ENCODE measurements at regions of chr3 and their contacts with region 1.

Region 1: GRCh38 chr3:158727206-158728060 is 4.8 kb downstream of the RARRES1 start:
- DNase-seq: peak; percentile 76 to 88 (median 86)
- H3K4me3 ChIP-seq: peak overlapping the region in 5 of 7 experiments; percentile 4 to 67 (median 37)
- H3K27ac ChIP-seq: peak overlapping the region in 1 of 2 experiments; percentile 43
- H3K4me1 ChIP-seq: peaks cover 10 to 39% (median 21%) of the 10 kb centered on the region in 4 experiments
- H3K27me3 ChIP-seq: peaks cover 0 to 6% (median 4%) of the 10 kb centered on the region in 5 experiments

Region 2: DNA sequence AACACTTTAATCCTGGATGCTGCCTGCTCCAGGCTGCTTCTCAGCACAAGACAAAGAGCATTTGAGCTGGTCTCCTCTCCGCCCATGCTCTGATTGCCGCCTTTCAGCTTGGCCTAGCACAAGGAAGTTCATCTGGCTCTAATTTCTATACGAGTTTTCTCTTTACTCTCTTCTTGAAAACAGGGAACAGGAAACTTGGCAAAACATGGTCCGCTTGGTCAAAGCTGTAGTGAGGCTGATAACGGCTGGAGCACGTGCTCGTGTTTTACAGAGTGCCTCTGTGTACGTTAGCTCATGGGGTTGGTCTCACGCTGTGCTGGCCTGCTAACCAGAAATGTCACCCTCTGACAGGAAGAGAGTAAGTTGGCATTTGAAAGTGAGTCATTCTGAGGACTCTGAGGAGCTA is 14.3 kb before region 1 on chr3:
- CTCF ChIA-PET with region 1: interaction called, 25 read pairs
- POLR2A ChIA-PET with region 1: interaction called, 4 read pairs
- DNase-seq: peak; percentile 73 to 93 (median 87)
- H3K4me3 ChIP-seq: no peak overlapping the region
- H3K27ac ChIP-seq: peak overlapping the region; percentile 1 to 25
- H3K4me1 ChIP-seq: peaks cover 9 to 49% (median 13%) of the 10 kb centered on the region in 4 experiments
- H3K27me3 ChIP-seq: no peaks in the 10 kb centered on the region

Region 3: DNA sequence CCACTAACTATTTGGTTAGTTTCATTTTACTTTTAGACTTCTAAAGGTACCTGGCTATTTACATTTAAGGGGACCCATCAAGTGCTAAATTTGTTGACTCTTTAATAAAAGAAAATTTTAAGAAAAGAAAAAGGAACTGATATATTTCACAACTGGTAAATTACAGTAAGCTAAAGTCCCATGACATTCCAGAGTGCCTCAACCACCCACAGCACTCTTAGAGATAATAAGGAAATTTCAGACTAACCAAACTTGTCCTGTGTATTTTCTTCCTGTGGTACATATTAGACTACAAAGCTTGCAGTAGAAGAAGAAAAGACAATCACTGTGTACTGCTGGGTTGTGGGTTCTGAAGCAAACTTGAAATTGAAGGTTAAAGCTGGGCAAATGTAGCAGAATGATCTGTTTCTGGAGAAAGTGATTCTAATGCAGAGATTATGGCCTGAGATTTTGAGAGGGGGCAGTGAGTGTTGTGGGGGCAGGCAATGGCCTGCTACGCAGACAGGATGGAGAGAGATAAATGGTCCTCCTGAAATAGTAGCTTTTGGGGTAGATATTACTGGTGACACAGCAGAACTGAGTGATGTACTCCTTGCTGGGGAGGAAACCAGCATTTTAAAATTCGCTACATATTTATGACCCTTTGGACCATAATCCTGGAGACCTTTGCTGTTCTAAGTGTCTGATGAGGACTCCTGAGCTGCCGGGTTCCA is 49.9 kb after region 1 on chr3:
- CTCF ChIA-PET with region 1: interaction called, 14 read pairs
- POLR2A ChIA-PET with region 1: no interaction called
- DNase-seq: no peak
- H3K4me3 ChIP-seq: no peak overlapping the region
- H3K27ac ChIP-seq: no peak overlapping the region
- H3K4me1 ChIP-seq: no peaks in the 10 kb centered on the region
- H3K27me3 ChIP-seq: no peaks in the 10 kb centered on the region

Region 4: DNA sequence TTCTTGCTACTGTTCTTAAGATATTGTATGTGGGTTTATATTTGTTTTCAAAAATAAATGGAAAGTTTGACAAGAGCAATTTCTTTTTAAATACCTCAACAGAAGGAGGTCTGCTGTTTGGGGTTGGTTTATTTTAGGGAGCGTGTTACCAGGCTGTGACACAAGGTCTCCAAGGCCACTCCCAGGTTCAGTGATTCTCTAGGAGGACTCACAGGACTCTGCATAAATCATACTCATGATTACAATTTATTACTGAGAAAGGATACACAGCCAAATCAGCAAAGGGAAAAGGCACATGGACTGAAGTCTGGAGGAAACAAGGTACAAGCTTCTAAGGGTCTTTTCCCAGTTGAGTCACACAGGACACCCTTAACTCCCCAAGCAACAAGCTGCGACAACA is 55.6 kb after region 1 on chr3:
- CTCF ChIA-PET with region 1: interaction called, 46 read pairs
- POLR2A ChIA-PET with region 1: no interaction called
- DNase-seq: no peak
- H3K4me3 ChIP-seq: no peak overlapping the region
- H3K27ac ChIP-seq: no peak overlapping the region
- H3K4me1 ChIP-seq: no peaks in the 10 kb centered on the region
- H3K27me3 ChIP-seq: no peaks in the 10 kb centered on the region

Measured in common myeloid progenitor, CD34-positive (primary cell).